Activated naive CD4-positive, alpha-beta T cell treated with anti-CD3 and anti-CD28 coated beads for 36 hours (primary cell): ENCODE measurements at regions of chr1 and their contacts with region 1.

Region 1: DNA sequence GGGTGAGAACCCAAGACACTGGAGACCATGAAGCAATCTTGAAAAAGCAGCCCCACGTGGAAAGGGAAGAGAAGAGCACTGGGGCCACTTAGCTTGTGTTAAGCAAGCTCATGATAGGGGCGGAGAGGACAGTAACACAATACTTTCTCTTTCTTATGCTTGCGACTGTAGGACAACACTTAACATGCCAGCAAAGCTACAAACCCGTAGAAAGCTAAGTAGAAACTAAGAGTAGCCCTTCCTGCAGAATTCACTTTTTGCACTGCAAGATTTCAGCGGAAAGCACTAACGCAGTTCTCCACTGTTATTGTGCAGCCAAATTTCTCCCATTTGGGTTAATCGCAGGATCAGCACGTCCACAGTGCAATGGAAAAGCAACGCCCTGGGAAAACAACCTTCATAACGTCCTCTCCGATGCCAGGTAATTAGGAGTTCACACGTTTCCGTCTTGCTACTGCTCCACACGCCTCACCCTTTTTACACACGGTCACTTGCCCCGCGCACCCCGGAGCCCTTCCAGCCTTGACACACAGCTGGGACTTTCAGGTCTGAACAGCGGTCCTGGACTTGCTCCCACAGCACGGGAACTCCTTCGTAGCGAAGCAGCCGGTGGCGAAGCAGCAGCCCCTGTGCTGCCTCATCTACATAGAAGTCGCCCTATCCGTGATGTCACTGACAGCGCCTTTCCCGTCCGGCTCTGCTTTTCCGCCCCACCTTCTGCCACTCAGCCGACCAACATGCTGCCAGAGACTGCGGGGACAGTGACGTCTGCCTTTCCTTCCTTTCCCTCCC is 148.6 kb downstream of the PPIAL4G start:
- DNase-seq: peak; percentile 92
- H3K4me3 Mint-ChIP-seq: peak overlapping the region; percentile 94
- H3K27ac Mint-ChIP-seq: peak overlapping the region; percentile 100
- H3K4me1 Mint-ChIP-seq: peaks cover 31% of the 10 kb centered on the region
- H3K27me3 Mint-ChIP-seq: peaks cover 11% of the 10 kb centered on the region

Region 2: GRCh38 chr1:148263128-148263905 is 71.2 kb before region 1 on chr1:
- CTCF ChIA-PET with region 1: interaction called, 4 read pairs
- intact Hi-C with region 1: loop called (anchors 1 kb)
- DNase-seq: peak; percentile 89
- H3K4me3 Mint-ChIP-seq: peak overlapping the region; percentile 84
- H3K27ac Mint-ChIP-seq: peak overlapping the region; percentile 98
- H3K4me1 Mint-ChIP-seq: peaks cover 14% of the 10 kb centered on the region
- H3K27me3 Mint-ChIP-seq: peaks cover 3% of the 10 kb centered on the region

Region 3: GRCh38 chr1:148318123-148318903 is 16.2 kb before region 1 on chr1:
- CTCF ChIA-PET with region 1: no interaction called
- intact Hi-C with region 1: loop called (anchors 1 kb)
- DNase-seq: peak; percentile 86
- H3K4me3 Mint-ChIP-seq: peak overlapping the region; percentile 77
- H3K27ac Mint-ChIP-seq: peak overlapping the region; percentile 79
- H3K4me1 Mint-ChIP-seq: peaks cover 34% of the 10 kb centered on the region
- H3K27me3 Mint-ChIP-seq: peaks cover 2% of the 10 kb centered on the region

Region 4: GRCh38 chr1:148362626-148363438 is 28.3 kb after region 1 on chr1:
- CTCF ChIA-PET with region 1: interaction called, 4 read pairs
- intact Hi-C with region 1: loop called (anchors 1 kb)
- DNase-seq: peak; percentile 78
- H3K4me3 Mint-ChIP-seq: peak overlapping the region; percentile 78
- H3K27ac Mint-ChIP-seq: peak overlapping the region; percentile 82
- H3K4me1 Mint-ChIP-seq: peaks cover 43% of the 10 kb centered on the region
- H3K27me3 Mint-ChIP-seq: no peaks in the 10 kb centered on the region

Region 5: GRCh38 chr1:148388260-148389027 is 53.9 kb after region 1 on chr1:
- CTCF ChIA-PET with region 1: no interaction called
- intact Hi-C with region 1: loop called (anchors 1 kb)
- DNase-seq: peak; percentile 96
- H3K4me3 Mint-ChIP-seq: peak overlapping the region; percentile 89
- H3K27ac Mint-ChIP-seq: peak overlapping the region; percentile 99
- H3K4me1 Mint-ChIP-seq: peaks cover 37% of the 10 kb centered on the region
- H3K27me3 Mint-ChIP-seq: no peaks in the 10 kb centered on the region